Activated CD4-positive, alpha-beta memory T cell treated with anti-CD3 and anti-CD28 coated beads, Interleukin-2, amount 10 ng/mL, durations not matched to agents 7 days and 5 days (primary cell): ENCODE measurements at regions of chr9 and their contacts with region 1.

Region 1: GRCh38 chr9:129139993-129140396 is 28.8 kb downstream of the PTPA start:
- DNase-seq: peak; percentile 87
- H3K4me3 Mint-ChIP-seq: peak overlapping the region; percentile 77
- H3K27ac Mint-ChIP-seq: peak overlapping the region; percentile 96
- H3K4me1 Mint-ChIP-seq: peaks cover 38% of the 10 kb centered on the region
- H3K27me3 Mint-ChIP-seq: no peaks in the 10 kb centered on the region

Region 2: GRCh38 chr9:128860976-128861336 is 279.0 kb before region 1 on chr9:
- CTCF ChIA-PET with region 1: no interaction called
- POLR2A ChIA-PET with region 1: no interaction called
- DNase-seq: no peak
- H3K4me3 Mint-ChIP-seq: no peak overlapping the region
- H3K27ac Mint-ChIP-seq: no peak overlapping the region
- H3K4me1 Mint-ChIP-seq: peaks cover 13% of the 10 kb centered on the region
- H3K27me3 Mint-ChIP-seq: no peaks in the 10 kb centered on the region

Region 3: GRCh38 chr9:129113645-129114304 is 26.2 kb before region 1 on chr9:
- CTCF ChIA-PET with region 1: interaction called, 10 read pairs
- POLR2A ChIA-PET with region 1: interaction called, 5 read pairs
- DNase-seq: no peak
- H3K4me3 Mint-ChIP-seq: no peak overlapping the region
- H3K27ac Mint-ChIP-seq: no peak overlapping the region
- H3K4me1 Mint-ChIP-seq: peaks cover 34% of the 10 kb centered on the region
- H3K27me3 Mint-ChIP-seq: no peaks in the 10 kb centered on the region

Region 4: DNA sequence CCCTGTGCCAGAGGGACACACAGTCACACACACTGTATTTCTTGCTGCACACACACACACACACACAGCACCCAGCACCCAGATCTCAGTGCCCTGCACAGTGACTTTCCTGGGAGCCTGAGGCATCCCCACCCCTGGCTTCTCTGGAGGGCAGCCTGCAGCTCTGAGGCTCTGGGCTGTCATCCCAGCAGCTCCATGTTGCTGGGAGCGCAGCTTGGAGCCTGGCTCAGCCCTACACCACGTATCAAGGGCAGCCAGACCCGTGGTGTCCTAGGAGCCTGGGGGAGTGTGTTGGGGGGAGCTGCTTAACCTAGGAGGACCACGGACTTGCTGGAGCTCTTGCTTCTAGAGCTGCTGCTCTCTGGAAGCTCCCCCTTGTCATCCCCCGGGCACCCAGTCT is 32.8 kb after region 1 on chr9:
- CTCF ChIA-PET with region 1: interaction called, 74 read pairs
- POLR2A ChIA-PET with region 1: interaction called, 24 read pairs
- DNase-seq: no peak
- H3K4me3 Mint-ChIP-seq: no peak overlapping the region
- H3K27ac Mint-ChIP-seq: no peak overlapping the region
- H3K4me1 Mint-ChIP-seq: peaks cover 33% of the 10 kb centered on the region
- H3K27me3 Mint-ChIP-seq: peaks cover 24% of the 10 kb centered on the region

Region 5: DNA sequence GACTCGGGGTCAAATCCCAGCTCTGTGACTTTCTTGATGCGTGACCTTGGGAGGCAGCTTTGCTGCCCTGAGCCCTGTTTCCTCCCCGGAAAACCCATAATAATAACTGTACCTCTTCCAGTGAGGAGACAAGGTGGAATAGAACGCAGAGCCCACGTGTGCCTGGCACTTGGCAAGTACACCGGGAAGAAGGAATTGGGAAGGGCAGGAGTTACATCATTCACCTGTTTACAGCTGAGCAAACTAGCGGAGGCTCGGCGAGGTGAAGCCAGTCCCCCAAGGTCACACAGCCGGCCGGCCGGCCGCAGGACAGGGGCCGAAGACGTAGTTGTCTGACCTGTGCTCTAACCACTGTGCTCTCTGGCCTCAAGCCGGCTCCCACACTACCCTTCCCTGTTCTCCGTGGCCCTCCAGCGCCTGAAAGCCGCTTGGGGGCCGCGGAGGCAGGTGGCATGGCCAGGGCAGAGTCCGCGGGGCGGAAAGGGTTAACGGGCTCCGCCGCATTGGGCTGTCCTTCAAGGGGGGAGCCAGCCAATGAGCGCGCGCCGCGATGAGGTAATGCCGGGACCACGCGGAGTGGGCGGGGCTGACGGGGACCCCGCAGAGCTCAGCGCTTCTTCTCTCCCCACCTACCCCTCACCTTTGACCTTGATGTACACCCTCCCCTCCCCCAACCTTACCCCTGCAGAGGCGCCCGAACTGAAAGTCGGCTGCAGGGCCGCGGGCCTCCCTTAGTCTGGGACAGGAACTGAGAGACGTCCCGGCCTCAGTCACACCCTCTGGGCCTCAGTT is 355.7 kb after region 1 on chr9:
- CTCF ChIA-PET with region 1: interaction called, 5 read pairs
- POLR2A ChIA-PET with region 1: interaction called, 15 read pairs
- DNase-seq: peak; percentile 88
- H3K4me3 Mint-ChIP-seq: peak overlapping the region; percentile 78
- H3K27ac Mint-ChIP-seq: peak overlapping the region; percentile 63
- H3K4me1 Mint-ChIP-seq: peaks cover 41% of the 10 kb centered on the region
- H3K27me3 Mint-ChIP-seq: no peaks in the 10 kb centered on the region

Region 6: DNA sequence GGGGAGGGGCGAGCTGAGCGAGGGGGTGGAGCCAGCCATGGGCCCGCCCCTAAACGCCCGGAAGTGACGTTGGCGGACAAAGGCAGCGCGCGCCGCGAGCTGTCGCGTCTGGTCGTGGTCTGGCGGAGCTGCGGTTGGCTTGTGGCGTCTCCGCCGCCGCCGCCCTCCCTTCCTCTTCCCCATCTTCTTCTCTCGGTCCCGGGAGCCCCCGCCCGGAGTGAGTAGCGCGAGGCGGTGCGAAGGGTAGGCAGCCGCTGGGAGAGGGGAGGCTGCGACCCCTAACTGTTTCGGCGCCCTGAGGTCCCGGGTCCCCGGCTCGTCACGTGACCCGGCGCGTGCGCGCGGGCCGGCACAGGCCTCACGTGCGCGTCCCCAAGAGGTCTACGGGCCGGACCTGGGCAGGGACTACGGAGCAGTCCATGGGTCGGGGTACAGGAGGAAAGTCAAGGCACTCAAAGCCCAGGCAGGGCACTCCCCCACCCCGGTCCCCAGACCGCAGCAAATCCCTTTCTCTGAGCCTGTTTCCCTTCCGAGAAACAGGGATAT is 486.2 kb after region 1 on chr9 and contains the start of gene NTMT1:
- CTCF ChIA-PET with region 1: interaction called, 112 read pairs
- POLR2A ChIA-PET with region 1: interaction called, 34 read pairs
- DNase-seq: peak; percentile 93
- H3K4me3 Mint-ChIP-seq: peak within 1 kb of the TSS; percentile 81
- H3K27ac Mint-ChIP-seq: peak within 1 kb of the TSS; percentile 88
- H3K4me1 Mint-ChIP-seq: peaks cover 56% of the 10 kb centered on the region
- H3K27me3 Mint-ChIP-seq: peaks cover 8% of the 10 kb centered on the region
- total RNA-seq, gene NTMT1: 34.2 to 38.7 TPM